K562 (cell line): ENCODE measurements at regions of chr21 and their contacts with region 1.

Region 1: GRCh38 chr21:37366482-37367316 is at the start of gene DYRK1A:
- DNase-seq: peak; percentile 96 to 100 (median 98)
- ATAC-seq: peak; percentile 79
- H3K4me3 ChIP-seq: peak within 1 kb of the TSS; percentile 88
- H3K27ac ChIP-seq: peak within 1 kb of the TSS; percentile 98
- H3K4me1 ChIP-seq: peaks cover 8 to 20% of the 10 kb centered on the region in 2 experiments
- H3K27me3 ChIP-seq: no peaks in the 10 kb centered on the region; a peak in 1 of 5 replicates
- CTCF ChIP-seq: no peak
- EP300 ChIP-seq: peak; percentile 65
- POLR2A ChIP-seq: peak; percentile 87
- RAD21 ChIP-seq: peak; percentile 9 to 11; a peak in 1 of 4 replicates
- polyA plus RNA-seq, gene DYRK1A: 3.7 to 13.2 TPM

Region 2: GRCh38 chr21:37087188-37087587 is 279.5 kb before region 1 on chr21:
- CTCF ChIA-PET with region 1: no interaction called
- POLR2A ChIA-PET with region 1: no interaction called
- in situ Hi-C with region 1: no loop called
- intact Hi-C with region 1: loop called (anchors 10 kb)
- DNase-seq: peak in 2 of 4 experiments; percentile 28 to 79
- ATAC-seq: peak; percentile 94
- H3K4me3 ChIP-seq: no peak overlapping the region
- H3K27ac ChIP-seq: peak overlapping the region; percentile 35
- H3K4me1 ChIP-seq: peaks cover 7 to 32% of the 10 kb centered on the region in 2 experiments; a peak in 4 of 5 replicates
- H3K27me3 ChIP-seq: no peaks in the 10 kb centered on the region
- CTCF ChIP-seq: peak; percentile 75 to 88 (median 77)
- EP300 ChIP-seq: peak; percentile 37
- POLR2A ChIP-seq: no peak
- RAD21 ChIP-seq: peak; percentile 67 to 86

Region 3: DNA sequence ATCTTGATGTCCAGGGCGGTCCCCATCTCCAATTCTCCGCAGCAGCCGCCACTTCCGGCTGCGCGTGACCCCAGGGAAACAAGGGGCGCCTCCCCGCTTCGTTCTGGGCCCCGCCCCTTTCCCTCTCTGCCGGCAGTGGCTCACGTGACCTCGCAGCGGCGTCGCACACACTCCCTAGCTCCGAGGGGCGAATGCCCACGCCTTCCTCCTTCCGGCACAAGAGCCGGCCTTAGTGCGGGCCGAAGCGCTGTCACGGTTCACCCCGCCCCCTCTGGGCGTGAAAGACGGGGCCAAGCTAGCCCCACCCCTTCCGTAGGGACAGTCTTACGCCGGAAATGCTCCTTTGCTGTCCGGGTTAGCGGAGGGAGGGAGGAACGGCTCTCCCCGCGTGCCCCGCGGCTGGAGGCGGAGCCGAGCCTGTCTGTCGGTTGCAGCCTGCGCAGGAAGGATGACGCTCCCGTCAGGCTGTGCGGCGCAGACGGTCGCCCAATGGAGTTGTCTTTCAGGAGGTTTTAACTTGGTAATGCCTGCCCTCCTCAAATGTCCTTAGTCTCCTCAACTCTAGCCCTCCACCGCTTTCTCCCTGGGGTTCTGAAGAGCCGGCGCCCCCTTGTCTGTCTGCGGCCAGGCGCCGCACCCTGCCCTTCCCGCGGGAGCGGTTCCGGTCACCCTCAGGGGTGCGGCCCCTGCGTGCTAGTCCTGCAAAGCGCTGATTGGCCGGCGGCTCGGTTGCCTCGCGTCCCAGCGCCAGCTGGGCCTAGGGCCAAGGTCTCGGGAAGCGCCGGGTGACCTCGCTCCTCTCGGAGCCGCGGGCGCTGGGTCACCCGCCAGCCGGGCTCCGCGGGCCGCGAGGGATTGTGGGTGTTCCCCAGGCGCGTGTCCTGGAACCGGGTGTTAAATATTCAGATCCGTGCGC is 99.2 kb before region 1 on chr21 and contains the start of gene VPS26C:
- CTCF ChIA-PET with region 1: no interaction called
- POLR2A ChIA-PET with region 1: interaction called, 17 read pairs
- in situ Hi-C with region 1: no loop called
- intact Hi-C with region 1: loop called (anchors 2 kb)
- DNase-seq: peak; percentile 93 to 100 (median 95)
- ATAC-seq: peak; percentile 91
- H3K4me3 ChIP-seq: peak within 1 kb of the TSS; percentile 71
- H3K27ac ChIP-seq: peak within 1 kb of the TSS; percentile 99
- H3K4me1 ChIP-seq: peaks cover 26 to 31% of the 10 kb centered on the region in 2 experiments; a peak in 4 of 5 replicates
- H3K27me3 ChIP-seq: no peaks in the 10 kb centered on the region
- CTCF ChIP-seq: 0 out of 6 replicates have a peak, but pooled peaks of 1 of the 3 experiments have one; percentile 8
- EP300 ChIP-seq: peak; percentile 23
- POLR2A ChIP-seq: peak; percentile 99
- RAD21 ChIP-seq: peak in 1 of 2 experiments; percentile 29; a peak in 2 of 4 replicates
- polyA plus RNA-seq, gene VPS26C: 32.8 to 42.2 TPM

Region 4: DNA sequence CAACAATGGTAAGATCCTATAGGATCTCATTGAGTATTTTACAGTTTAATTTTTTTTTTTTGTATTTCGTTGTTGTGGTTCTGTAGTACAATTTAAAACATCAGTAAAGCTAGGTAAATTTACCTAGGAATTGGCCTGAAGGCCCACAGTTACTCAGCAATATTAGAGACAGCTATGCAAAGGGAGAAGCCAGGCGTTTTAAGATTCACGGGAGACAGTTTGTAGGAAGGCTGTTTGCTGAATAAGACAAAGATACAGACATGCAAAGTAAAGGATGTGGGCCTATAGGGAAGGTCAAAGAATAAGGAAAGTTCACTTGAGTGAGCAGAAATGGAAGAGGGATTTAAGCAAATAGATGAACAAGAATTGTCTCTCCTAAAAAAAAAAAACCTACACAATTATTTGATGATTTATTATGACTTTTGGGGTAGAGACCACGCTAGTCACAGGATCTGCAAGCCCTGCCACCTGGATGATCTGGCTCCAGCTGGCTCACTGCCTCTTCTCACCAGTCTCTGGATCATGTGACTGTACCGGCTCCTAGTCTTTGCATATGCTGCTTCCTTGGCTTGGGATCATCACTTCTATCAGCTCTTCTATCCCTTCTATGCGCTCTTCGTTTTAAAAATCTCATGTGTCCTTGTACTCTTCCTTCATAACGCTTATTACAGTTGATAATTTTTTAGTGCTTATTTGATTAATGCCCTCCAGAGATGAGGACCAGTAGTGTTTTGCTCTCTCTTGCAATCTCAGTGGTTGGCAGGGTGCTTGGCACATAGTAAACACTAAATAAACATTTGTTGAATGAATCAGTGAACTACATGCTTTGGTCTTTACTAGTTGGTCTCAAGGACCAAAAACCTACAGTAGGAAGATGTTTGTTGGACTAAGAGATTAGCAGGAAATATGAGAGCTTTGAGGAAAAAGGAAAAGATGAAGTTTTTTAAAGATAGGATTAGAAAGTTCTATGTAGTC is 13.9 kb after region 1 on chr21:
- CTCF ChIA-PET with region 1: no interaction called
- POLR2A ChIA-PET with region 1: interaction called, 109 read pairs
- in situ Hi-C with region 1: no loop called
- intact Hi-C with region 1: no loop called
- DNase-seq: peak in 1 of 4 experiments; percentile 51
- ATAC-seq: peak; percentile 14
- H3K4me3 ChIP-seq: no peak overlapping the region
- H3K27ac ChIP-seq: peak overlapping the region; percentile 74; the same call in 1 of the 3 replicates
- H3K4me1 ChIP-seq: peaks cover 21 to 60% of the 10 kb centered on the region in 2 experiments
- H3K27me3 ChIP-seq: no peaks in the 10 kb centered on the region
- CTCF ChIP-seq: no peak
- EP300 ChIP-seq: no peak
- POLR2A ChIP-seq: no peak
- RAD21 ChIP-seq: no peak

Region 5: DNA sequence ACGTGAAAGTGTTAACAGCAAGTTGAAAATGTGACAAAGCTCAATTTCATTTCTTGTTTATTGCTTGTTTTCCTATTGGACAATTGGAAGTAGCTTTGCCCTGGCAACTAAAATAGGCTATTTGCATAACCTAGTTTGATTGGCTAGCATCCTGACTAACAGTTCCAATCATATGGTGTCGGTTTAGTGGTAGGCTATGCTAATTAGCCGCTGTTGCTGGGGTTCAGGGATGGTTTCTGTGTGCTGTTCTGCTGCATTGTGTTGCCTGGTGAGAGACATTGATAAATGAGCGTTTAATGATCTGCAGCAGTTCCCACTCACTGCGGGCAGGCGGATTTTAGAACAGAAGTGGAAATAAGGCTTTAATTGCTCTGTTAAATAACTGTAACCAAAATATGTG is 68.4 kb after region 1 on chr21:
- CTCF ChIA-PET with region 1: no interaction called
- POLR2A ChIA-PET with region 1: interaction called, 3 read pairs
- in situ Hi-C with region 1: no loop called
- intact Hi-C with region 1: loop called (anchors 5 kb)
- DNase-seq: peak; percentile 33 to 94 (median 67)
- ATAC-seq: peak; percentile 100
- H3K4me3 ChIP-seq: no peak overlapping the region
- H3K27ac ChIP-seq: peak overlapping the region; percentile 24; the same call in 1 of the 3 replicates
- H3K4me1 ChIP-seq: peaks cover 0 to 15% of the 10 kb centered on the region in 2 experiments; a peak in 3 of 5 replicates
- H3K27me3 ChIP-seq: no peaks in the 10 kb centered on the region
- CTCF ChIP-seq: no peak
- EP300 ChIP-seq: no peak
- POLR2A ChIP-seq: no peak
- RAD21 ChIP-seq: no peak

Region 6: GRCh38 chr21:37445228-37445627 is 78.5 kb after region 1 on chr21:
- CTCF ChIA-PET with region 1: interaction called, 3 read pairs
- POLR2A ChIA-PET with region 1: interaction called, 4 read pairs
- in situ Hi-C with region 1: no loop called
- intact Hi-C with region 1: loop called (anchors 5 kb)
- DNase-seq: no peak
- ATAC-seq: no peak
- H3K4me3 ChIP-seq: no peak overlapping the region
- H3K27ac ChIP-seq: no peak overlapping the region
- H3K4me1 ChIP-seq: peaks cover 15 to 40% of the 10 kb centered on the region in 2 experiments
- H3K27me3 ChIP-seq: no peaks in the 10 kb centered on the region
- CTCF ChIP-seq: no peak
- EP300 ChIP-seq: no peak
- POLR2A ChIP-seq: no peak
- RAD21 ChIP-seq: no peak